AG04449 (cell line): ENCODE measurements at regions of chr18 and their contacts with region 1.

Region 1: DNA sequence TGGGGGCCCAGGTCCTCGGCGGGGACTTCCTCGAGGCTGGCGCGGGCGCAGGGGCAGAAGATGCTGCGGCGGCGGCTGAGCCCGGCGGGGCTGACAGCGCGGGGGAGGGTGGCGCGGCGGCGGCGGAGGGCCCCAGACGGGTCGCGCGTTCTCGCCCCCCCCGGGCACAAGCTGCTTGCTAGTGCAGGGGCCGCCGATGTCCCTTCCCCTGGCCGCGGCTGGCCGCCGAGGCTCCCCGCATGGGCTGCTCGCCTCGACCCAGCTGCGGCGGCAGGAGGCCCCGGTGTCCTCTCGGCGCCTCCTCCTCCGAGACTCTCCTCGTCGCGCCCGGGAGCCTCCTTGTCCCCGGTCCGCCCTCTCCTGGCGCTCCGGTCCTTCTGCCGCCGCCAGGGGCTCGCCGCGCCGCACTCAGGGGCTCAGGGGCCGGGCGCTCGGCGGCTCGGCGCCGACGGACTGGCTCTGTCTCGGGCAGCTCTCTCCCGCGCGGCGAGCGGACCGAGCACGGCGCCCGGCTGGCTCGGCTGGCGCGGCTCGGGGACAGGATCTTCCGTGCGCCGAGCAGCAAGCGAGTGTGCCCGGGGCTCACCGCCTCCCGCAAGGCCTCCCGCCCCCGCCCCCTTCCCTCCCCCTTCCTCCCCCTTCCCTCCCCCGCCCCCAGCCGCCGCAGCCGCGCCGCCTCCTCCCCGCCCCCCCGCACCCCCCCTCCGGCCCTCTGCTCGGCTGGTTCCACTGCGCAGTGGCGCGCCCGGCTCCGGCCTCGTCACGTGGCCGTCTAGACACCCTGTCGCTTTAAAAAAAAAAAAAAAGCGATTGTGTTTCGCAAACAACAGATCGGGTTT is 902 bp upstream of the SMAD7 start:
- DNase-seq: no peak
- H3K4me3 ChIP-seq: peak overlapping the region; percentile 87
- CTCF ChIP-seq: peak; percentile 48

Region 2: GRCh38 chr18:48777026-48777743 is 174.5 kb before region 1 on chr18:
- CTCF ChIA-PET with region 1: interaction called, 11 read pairs
- POLR2A ChIA-PET with region 1: no interaction called
- DNase-seq: no peak
- H3K4me3 ChIP-seq: no peak overlapping the region
- CTCF ChIP-seq: peak; percentile 87

Region 3: DNA sequence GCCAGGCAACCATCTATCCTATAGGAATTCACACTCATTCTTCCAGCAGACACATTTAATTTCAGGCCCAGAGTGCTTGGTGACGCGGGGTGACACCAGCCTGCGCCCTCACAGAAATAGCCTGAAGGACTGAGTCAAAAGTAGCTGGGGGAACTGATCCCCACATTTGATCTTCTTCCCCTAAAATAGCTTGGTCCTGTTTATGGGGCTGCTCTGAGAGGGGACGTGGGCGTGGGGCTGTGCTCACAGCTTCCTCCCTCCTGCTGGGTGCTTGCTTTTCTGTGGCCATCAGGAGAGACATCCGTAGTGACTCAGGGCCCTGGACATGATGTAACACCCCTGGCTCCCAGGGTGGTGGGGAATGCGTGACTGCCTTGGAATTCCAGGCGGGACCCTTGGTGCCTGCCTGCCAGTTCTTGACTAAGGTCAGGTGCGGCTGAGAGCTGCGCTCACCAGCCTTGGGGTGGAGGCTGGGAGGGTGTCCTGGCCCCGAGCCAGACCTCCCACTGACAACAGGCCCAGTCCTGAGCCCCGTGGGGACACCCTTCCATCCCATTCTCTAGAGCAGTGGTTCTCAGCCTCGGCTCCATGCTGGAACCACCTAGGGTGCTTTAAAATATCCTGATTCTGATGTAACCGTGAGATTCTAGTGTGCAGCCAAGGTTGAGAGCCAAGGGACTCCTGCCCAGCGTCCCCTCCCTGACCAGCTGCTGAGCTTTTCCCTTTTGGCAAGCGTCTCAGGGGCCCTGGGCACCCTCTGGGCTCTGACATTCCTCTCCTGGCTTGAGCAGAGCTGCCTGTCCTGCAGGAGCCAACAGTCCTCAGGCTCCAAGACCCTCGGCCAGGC is 46.5 kb after region 1 on chr18:
- CTCF ChIA-PET with region 1: interaction called, 4 read pairs
- POLR2A ChIA-PET with region 1: interaction called, 16 read pairs
- DNase-seq: peak; percentile 84
- H3K4me3 ChIP-seq: no peak overlapping the region
- CTCF ChIP-seq: no peak

Region 4: GRCh38 chr18:49041435-49042245 is 90.0 kb after region 1 on chr18:
- CTCF ChIA-PET with region 1: interaction called, 12 read pairs
- POLR2A ChIA-PET with region 1: interaction called, 3 read pairs
- DNase-seq: no peak
- H3K4me3 ChIP-seq: no peak overlapping the region
- CTCF ChIP-seq: peak; percentile 69

Region 5: GRCh38 chr18:49055754-49056172 is 104.1 kb after region 1 on chr18:
- CTCF ChIA-PET with region 1: no interaction called
- POLR2A ChIA-PET with region 1: interaction called, 10 read pairs
- DNase-seq: no peak
- H3K4me3 ChIP-seq: no peak overlapping the region
- CTCF ChIP-seq: no peak